ENCODE measurements at regions of chr3 and their contacts with region 1.

Region 1: DNA sequence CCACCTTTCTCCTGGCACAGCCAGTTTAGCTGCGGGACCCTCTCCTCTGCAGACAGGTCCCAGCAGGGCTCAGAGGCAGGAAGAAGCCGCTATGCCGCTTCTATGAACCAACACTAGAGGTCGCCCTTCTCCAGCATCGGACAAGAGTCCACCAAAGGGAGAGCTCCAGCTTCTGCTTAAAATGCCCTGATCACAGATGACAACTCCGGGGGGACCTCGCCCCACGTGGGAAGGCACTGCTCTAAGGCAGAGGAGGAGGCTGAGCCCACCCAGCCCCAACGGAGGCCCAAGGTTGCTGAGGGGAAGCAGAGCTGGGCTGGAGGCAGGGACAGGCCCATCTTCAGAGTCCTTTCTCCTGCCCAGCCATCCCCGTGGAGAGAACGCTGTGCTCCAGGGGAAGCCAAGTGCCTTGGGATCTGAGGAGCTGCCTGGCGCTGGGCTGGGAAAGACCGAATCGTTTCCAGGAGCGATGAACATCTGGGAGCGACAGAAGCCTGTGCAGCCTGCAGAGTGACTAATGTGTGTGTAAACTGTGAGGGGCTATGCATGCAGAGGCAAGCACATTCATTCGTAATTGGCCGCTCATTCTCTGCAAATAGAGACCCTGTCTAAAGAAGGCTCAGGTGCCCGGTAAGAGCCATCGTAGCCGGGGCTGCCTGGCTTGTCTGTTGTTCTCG is 43.5 kb upstream of the BDH1 start:
- DNase-seq: peak; percentile 47 to 84 (median 79)
- ATAC-seq: peak; percentile 97
- H3K4me3 ChIP-seq: no peak overlapping the region
- H3K4me3 Mint-ChIP-seq: peak overlapping the region in 2 of 10 donors; percentile 6 to 28
- H3K27ac ChIP-seq: no peak overlapping the region
- H3K27ac Mint-ChIP-seq: peak overlapping the region in 8 of 9 donors; percentile 23 to 79 (median 58)
- H3K4me1 ChIP-seq: peaks cover 0 to 9% of the 10 kb centered on the region in 2 donors
- H3K4me1 Mint-ChIP-seq: peaks cover 6 to 24% (median 10%) of the 10 kb centered on the region in 7 donors
- H3K27me3 ChIP-seq: no peaks in the 10 kb centered on the region
- H3K27me3 Mint-ChIP-seq: peaks cover 0 to 4% (median 0%) of the 10 kb centered on the region in 5 donors

Region 2: DNA sequence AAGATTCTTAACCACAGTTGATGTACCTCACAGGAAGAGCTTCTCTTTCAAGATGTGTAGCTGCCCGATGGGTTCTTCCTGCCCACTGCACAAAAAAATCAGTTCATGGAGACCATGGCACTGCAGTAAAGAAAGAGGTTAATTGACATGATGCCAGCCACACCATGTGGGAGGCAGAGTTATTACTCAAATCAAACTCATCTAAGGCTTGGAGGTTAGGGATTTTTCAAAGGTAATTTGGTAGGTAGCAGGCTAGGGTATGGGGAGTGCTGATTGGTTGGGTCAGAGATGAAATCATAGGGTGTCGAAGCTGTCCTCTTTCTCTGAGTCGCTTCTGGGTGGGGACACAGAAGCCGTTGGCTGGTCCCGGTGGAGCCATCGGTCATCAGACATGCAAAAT is 14.0 kb after region 1 on chr3:
- CTCF ChIA-PET with region 1: interaction called, 13 read pairs
- POLR2A ChIA-PET with region 1: interaction called, 9 read pairs
- intact Hi-C with region 1: no loop called
- DNase-seq: peak in 7 of 9 donors; percentile 67 to 86 (median 79)
- ATAC-seq: peak; percentile 96
- H3K4me3 ChIP-seq: no peak overlapping the region
- H3K4me3 Mint-ChIP-seq: peak overlapping the region; percentile 37 to 72 (median 51)
- H3K27ac ChIP-seq: peak overlapping the region; percentile 65
- H3K27ac Mint-ChIP-seq: peak overlapping the region; percentile 60 to 97 (median 86)
- H3K4me1 ChIP-seq: peaks cover 6 to 8% of the 10 kb centered on the region in 2 donors
- H3K4me1 Mint-ChIP-seq: peaks cover 9 to 52% (median 31%) of the 10 kb centered on the region in 7 donors
- H3K27me3 ChIP-seq: no peaks in the 10 kb centered on the region
- H3K27me3 Mint-ChIP-seq: no peaks in the 10 kb centered on the region

Region 3: GRCh38 chr3:197667978-197668377 is 68.8 kb after region 1 on chr3:
- CTCF ChIA-PET with region 1: interaction called, 3 read pairs
- POLR2A ChIA-PET with region 1: no interaction called
- intact Hi-C with region 1: loop called (anchors 2 to 5 kb)
- DNase-seq: no peak
- ATAC-seq: no peak
- H3K4me3 ChIP-seq: no peak overlapping the region
- H3K4me3 Mint-ChIP-seq: no peak overlapping the region
- H3K27ac ChIP-seq: no peak overlapping the region
- H3K27ac Mint-ChIP-seq: peak overlapping the region in 1 of 9 donors; percentile 39
- H3K4me1 ChIP-seq: no peaks in the 10 kb centered on the region
- H3K4me1 Mint-ChIP-seq: no peaks in the 10 kb centered on the region
- H3K27me3 ChIP-seq: no peaks in the 10 kb centered on the region
- H3K27me3 Mint-ChIP-seq: no peaks in the 10 kb centered on the region

Region 4: GRCh38 chr3:197801891-197802778 is 202.9 kb after region 1 on chr3:
- CTCF ChIA-PET with region 1: no interaction called
- POLR2A ChIA-PET with region 1: no interaction called
- intact Hi-C with region 1: loop called in 1 of 2 experiments (anchors 2 kb)
- DNase-seq: peak in 5 of 9 donors; percentile 30 to 39 (median 34)
- ATAC-seq: peak; percentile 78
- H3K4me3 ChIP-seq: no peak overlapping the region
- H3K4me3 Mint-ChIP-seq: peak overlapping the region in 7 of 10 donors; percentile 12 to 35 (median 19)
- H3K27ac ChIP-seq: no peak overlapping the region
- H3K27ac Mint-ChIP-seq: peak overlapping the region; percentile 44 to 81 (median 57)
- H3K4me1 ChIP-seq: peaks cover 13 to 21% of the 10 kb centered on the region in 2 donors
- H3K4me1 Mint-ChIP-seq: peaks cover 35 to 59% (median 53%) of the 10 kb centered on the region in 7 donors
- H3K27me3 ChIP-seq: no peaks in the 10 kb centered on the region
- H3K27me3 Mint-ChIP-seq: no peaks in the 10 kb centered on the region